CD4-positive, alpha-beta T cell (primary cell): ENCODE measurements at regions of chr11 and their contacts with region 1.

Region 1: DNA sequence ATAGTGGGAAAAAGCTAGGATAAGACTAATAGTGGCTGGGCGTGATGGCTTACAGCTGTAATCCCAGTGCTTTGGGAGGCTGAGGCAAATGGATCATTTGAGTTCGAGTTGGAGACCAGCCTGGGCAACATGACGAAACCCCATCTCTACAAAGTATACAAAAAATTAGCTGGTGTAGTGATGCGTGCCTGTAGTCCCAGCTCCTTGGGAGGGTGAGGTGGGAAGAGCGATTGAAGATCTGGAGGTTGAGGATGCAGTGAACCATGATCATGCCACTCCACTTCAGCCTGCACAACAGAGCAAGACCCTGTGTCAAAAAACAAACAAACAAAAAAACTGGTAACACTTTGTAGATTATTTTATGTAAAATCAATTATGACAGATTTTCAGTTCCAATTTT is 8.8 kb downstream of the ARHGAP42 start:
- DNase-seq: no peak
- ATAC-seq: no peak
- H3K4me3 ChIP-seq: no peak overlapping the region
- H3K4me3 Mint-ChIP-seq: no peak overlapping the region
- H3K27ac ChIP-seq: no peak overlapping the region
- H3K27ac Mint-ChIP-seq: no peak overlapping the region
- H3K4me1 ChIP-seq: no peaks in the 10 kb centered on the region
- H3K4me1 Mint-ChIP-seq: no peaks in the 10 kb centered on the region
- H3K27me3 ChIP-seq: no peaks in the 10 kb centered on the region
- H3K27me3 Mint-ChIP-seq: peaks cover 2% of the 10 kb centered on the region
- CTCF ChIP-seq: no peak

Region 2: DNA sequence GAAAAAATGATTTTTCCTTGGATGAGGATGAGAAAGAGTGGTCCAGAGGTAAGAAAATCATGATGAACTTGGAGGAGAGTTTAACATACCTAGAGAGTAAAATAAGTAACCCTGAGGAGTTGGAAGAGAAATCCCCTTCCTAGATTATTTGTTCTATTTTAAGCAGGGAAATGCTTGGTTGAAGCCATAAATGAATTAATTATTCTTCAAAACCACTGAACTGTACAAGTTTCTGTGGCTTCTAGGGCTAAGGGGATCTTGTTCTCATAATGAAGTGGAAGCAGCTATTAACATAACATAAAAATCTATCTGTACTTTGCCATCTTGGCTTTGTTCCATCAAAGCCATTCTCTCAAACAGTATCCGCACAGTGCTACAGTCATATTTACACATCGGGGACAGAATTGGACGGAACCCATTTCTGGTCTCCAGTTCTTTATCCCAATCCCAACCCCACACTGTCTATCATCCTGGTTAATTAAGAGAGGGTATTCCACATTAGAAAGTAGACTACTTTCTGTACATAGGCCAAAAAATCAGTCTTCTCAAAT is 23.4 kb before region 1 on chr11:
- CTCF ChIA-PET with region 1: no interaction called
- POLR2A ChIA-PET with region 1: no interaction called
- intact Hi-C with region 1: loop called in 1 of 2 experiments (anchors 1 kb)
- DNase-seq: no peak
- ATAC-seq: no peak
- H3K4me3 ChIP-seq: no peak overlapping the region
- H3K4me3 Mint-ChIP-seq: no peak overlapping the region
- H3K27ac ChIP-seq: no peak overlapping the region
- H3K27ac Mint-ChIP-seq: no peak overlapping the region
- H3K4me1 ChIP-seq: no peaks in the 10 kb centered on the region
- H3K4me1 Mint-ChIP-seq: no peaks in the 10 kb centered on the region
- H3K27me3 ChIP-seq: no peaks in the 10 kb centered on the region
- H3K27me3 Mint-ChIP-seq: no peaks in the 10 kb centered on the region
- CTCF ChIP-seq: no peak